HCT116 (cell line): ENCODE measurements at regions of chr2 and their contacts with region 1.

Region 1: DNA sequence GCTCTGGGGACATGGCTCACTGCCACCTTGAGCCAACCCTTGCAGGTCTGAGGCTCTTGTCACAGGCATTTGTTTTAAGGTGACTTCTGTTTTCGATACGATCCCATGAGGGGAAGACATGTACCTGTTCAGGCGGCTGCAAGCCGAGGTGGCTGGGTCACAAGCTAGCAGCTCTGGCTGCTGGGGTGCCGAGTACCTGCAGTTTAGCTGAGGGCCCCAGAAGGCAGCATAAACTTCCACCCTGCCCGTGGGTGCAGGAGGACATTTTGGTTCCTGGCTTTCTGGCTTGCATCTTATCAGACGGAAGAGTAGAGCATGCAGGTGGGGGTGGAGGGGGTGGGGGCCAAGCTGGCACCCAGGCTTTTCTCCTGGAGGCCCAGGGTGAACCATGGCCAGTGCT is 28.4 kb downstream of the COA5 start:
- DNase-seq: no peak
- ATAC-seq: no peak
- H3K4me3 ChIP-seq: no peak overlapping the region
- H3K27ac ChIP-seq: no peak overlapping the region
- H3K4me1 ChIP-seq: no peaks in the 10 kb centered on the region
- H3K27me3 ChIP-seq: no peaks in the 10 kb centered on the region
- CTCF ChIP-seq: no peak
- POLR2A ChIP-seq: no peak
- RAD21 ChIP-seq: no peak

Region 2: GRCh38 chr2:98538280-98539041 is 41.5 kb before region 1 on chr2:
- CTCF ChIA-PET with region 1: no interaction called
- POLR2A ChIA-PET with region 1: no interaction called
- RAD21 ChIA-PET with region 1: no interaction called
- intact Hi-C with region 1: loop called (anchors 1 kb)
- DNase-seq: no peak
- ATAC-seq: no peak
- H3K4me3 ChIP-seq: no peak overlapping the region
- H3K27ac ChIP-seq: no peak overlapping the region
- H3K4me1 ChIP-seq: no peaks in the 10 kb centered on the region
- H3K27me3 ChIP-seq: no peaks in the 10 kb centered on the region
- CTCF ChIP-seq: no peak
- POLR2A ChIP-seq: no peak
- RAD21 ChIP-seq: no peak

Region 3: GRCh38 chr2:98883780-98884211 is 303.9 kb after region 1 on chr2:
- CTCF ChIA-PET with region 1: no interaction called
- POLR2A ChIA-PET with region 1: no interaction called
- RAD21 ChIA-PET with region 1: no interaction called
- intact Hi-C with region 1: no loop called
- DNase-seq: no peak
- ATAC-seq: no peak
- H3K4me3 ChIP-seq: no peak overlapping the region
- H3K27ac ChIP-seq: no peak overlapping the region
- H3K4me1 ChIP-seq: no peaks in the 10 kb centered on the region
- H3K27me3 ChIP-seq: no peaks in the 10 kb centered on the region
- CTCF ChIP-seq: no peak
- POLR2A ChIP-seq: no peak
- RAD21 ChIP-seq: no peak